ENCODE measurements at regions of chr9 and their contacts with region 1.

Region 1: GRCh38 chr9:35481347-35481975 is 8.4 kb upstream of the RUSC2 start:
- DNase-seq: peak; percentile 71
- H3K4me3 ChIP-seq: no peak overlapping the region
- H3K27ac ChIP-seq: no peak overlapping the region
- H3K4me1 ChIP-seq: peaks cover 5% of the 10 kb centered on the region
- H3K27me3 ChIP-seq: no peaks in the 10 kb centered on the region
- CTCF ChIP-seq: peak; percentile 75 to 80
- POLR2A ChIP-seq: no peak

Region 2: DNA sequence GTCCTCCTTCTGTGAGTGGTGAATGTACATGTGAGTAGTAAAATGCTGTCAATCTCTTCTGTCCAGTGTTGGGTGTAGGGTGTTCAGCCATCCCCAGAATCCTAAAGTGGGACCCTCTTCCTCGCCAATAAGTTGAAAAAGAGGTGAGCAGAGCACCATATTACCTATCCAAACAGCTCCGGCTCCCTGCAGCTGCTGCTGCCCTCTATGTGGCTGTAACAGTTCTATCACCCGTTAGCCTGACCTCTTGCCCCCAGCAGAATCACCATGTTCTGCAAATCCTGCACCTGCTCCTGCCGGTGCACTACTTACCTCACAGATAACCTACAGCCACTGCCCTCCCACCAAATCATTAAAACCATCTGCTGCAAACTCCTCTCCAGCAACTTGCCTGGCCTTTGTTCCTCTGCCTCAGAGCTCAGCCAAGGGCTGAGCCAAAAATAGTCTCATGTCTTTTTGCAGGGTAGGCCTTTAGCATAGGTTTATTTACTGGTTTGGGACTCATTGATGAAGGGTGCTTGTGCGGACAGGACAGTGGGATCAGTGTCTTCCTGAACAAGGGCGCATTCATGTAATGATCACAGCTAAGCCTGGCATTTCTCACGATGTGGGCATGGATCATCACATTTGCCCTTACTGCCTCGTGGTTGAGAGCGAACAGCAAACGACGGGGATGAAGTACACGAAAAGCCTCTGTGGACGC is 721.9 kb before region 1 on chr9:
- CTCF ChIA-PET with region 1: interaction called, 4 read pairs
- POLR2A ChIA-PET with region 1: no interaction called
- dilution Hi-C with region 1: no loop called
- intact Hi-C with region 1: loop called (anchors 5 kb)
- DNase-seq: no peak
- H3K4me3 ChIP-seq: no peak overlapping the region
- H3K27ac ChIP-seq: no peak overlapping the region
- H3K4me1 ChIP-seq: no peaks in the 10 kb centered on the region
- H3K27me3 ChIP-seq: peaks cover 0 to 2% of the 10 kb centered on the region in 2 experiments
- CTCF ChIP-seq: no peak
- POLR2A ChIP-seq: no peak

Region 3: GRCh38 chr9:35096035-35096849 is 385.2 kb before region 1 on chr9 and contains the start of gene PIGO:
- CTCF ChIA-PET with region 1: interaction called, 6 read pairs
- POLR2A ChIA-PET with region 1: no interaction called
- dilution Hi-C with region 1: no loop called
- intact Hi-C with region 1: loop called (anchors 1 kb)
- DNase-seq: peak; percentile 78
- H3K4me3 ChIP-seq: peak within 1 kb of the TSS; percentile 69 to 93 (median 74)
- H3K27ac ChIP-seq: peak within 1 kb of the TSS; percentile 85
- H3K4me1 ChIP-seq: peaks cover 2% of the 10 kb centered on the region
- H3K27me3 ChIP-seq: no peaks in the 10 kb centered on the region
- CTCF ChIP-seq: peak; percentile 77 to 99
- POLR2A ChIP-seq: peak; percentile 46
- total RNA-seq, gene PIGO: 17.7 and 23.5 TPM in 2 replicates

Region 4: GRCh38 chr9:35333551-35333950 is 147.9 kb before region 1 on chr9:
- CTCF ChIA-PET with region 1: no interaction called
- POLR2A ChIA-PET with region 1: no interaction called
- dilution Hi-C with region 1: no loop called
- intact Hi-C with region 1: loop called (anchors 5 kb)
- DNase-seq: peak; percentile 59
- H3K4me3 ChIP-seq: no peak overlapping the region
- H3K27ac ChIP-seq: peak overlapping the region; percentile 93
- H3K4me1 ChIP-seq: peaks cover 37% of the 10 kb centered on the region
- H3K27me3 ChIP-seq: no peaks in the 10 kb centered on the region
- CTCF ChIP-seq: no peak
- POLR2A ChIP-seq: no peak

Region 5: DNA sequence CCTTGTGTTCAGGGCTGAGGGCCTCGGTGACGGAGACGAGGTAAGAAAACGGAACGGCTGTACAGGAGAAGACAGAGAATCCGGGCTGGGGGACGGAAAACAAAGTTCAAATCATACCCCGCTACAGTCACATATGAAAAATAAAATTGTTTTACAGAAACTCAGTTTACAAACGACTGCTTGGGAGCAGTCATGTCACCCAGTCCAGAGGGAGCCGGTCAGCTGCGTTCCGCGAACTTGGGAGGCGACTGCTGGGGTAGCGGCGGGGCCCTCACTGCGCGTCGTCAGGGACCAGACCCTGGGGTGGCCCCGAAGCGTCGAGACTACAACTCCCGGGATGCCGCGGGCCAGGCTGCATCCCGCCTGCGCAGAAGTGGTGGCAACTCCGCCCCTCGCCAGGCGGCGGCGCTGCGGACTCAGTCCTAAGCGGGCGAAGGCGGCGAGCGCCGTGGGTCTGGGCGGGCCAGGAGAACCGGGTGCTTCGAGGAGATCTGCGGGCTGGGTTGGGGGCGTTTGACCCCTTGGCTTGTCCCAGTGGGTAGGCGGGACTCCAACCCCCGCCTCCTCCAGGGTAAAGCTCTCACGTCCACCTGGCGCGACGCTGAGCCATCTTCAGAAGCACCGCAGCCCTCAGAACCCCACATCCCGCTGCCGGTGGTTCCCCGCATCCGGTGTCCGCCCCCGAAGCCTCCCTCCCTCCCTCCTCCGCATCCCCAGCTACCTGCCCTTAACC is 165.2 kb after region 1 on chr9:
- CTCF ChIA-PET with region 1: interaction called, 3 read pairs
- POLR2A ChIA-PET with region 1: no interaction called
- dilution Hi-C with region 1: no loop called
- intact Hi-C with region 1: loop called (anchors 5 kb)
- DNase-seq: peak; percentile 91
- H3K4me3 ChIP-seq: peak overlapping the region; percentile 39 to 80 (median 47)
- H3K27ac ChIP-seq: peak overlapping the region; percentile 24
- H3K4me1 ChIP-seq: peaks cover 6% of the 10 kb centered on the region
- H3K27me3 ChIP-seq: peaks cover 0 to 2% of the 10 kb centered on the region in 2 experiments
- CTCF ChIP-seq: peak; percentile 91 to 98
- POLR2A ChIP-seq: peak; percentile 27

Region 6: GRCh38 chr9:35732122-35732799 is 250.8 kb after region 1 on chr9 and contains the starts of genes CREB3 and TLN1:
- CTCF ChIA-PET with region 1: no interaction called
- POLR2A ChIA-PET with region 1: no interaction called
- dilution Hi-C with region 1: no loop called
- intact Hi-C with region 1: no loop called
- DNase-seq: peak; percentile 99
- H3K4me3 ChIP-seq: peak within 1 kb of the TSS; percentile 46 to 92 (median 79)
- H3K27ac ChIP-seq: peak within 1 kb of the TSS; percentile 79
- H3K4me1 ChIP-seq: peaks cover 55% of the 10 kb centered on the region
- H3K27me3 ChIP-seq: no peaks in the 10 kb centered on the region
- CTCF ChIP-seq: peak in 1 of 2 donors; percentile 14
- POLR2A ChIP-seq: peak; percentile 48
- total RNA-seq, gene CREB3: 36.4 and 39.8 TPM in 2 replicates
- total RNA-seq, gene TLN1: 424 and 450 TPM in 2 replicates

Measured in endothelial cell of umbilical vein (primary cell).